ENCODE measurements at regions of chr10 and their contacts with region 1.

Region 1: GRCh38 chr10:29131952-29132820 is 156.7 kb upstream of the LYZL1 start:
- DNase-seq: peak; percentile 16
- H3K4me3 ChIP-seq: no peak overlapping the region
- H3K27me3 ChIP-seq: no peaks in the 10 kb centered on the region
- CTCF ChIP-seq: no peak

Region 2: GRCh38 chr10:28676968-28677887 is 455.0 kb before region 1 on chr10 and contains the start of gene BAMBI:
- CTCF ChIA-PET with region 1: interaction called, 19 read pairs
- POLR2A ChIA-PET with region 1: no interaction called
- DNase-seq: no peak
- H3K4me3 ChIP-seq: peak within 1 kb of the TSS; percentile 86
- H3K27me3 ChIP-seq: peaks cover 20% of the 10 kb centered on the region
- CTCF ChIP-seq: peak; percentile 47
- polyA plus RNA-seq, gene BAMBI: 5.1 and 6.0 TPM in 2 replicates